ENCODE measurements at regions of chr5 and their contacts with region 1.

Region 1: DNA sequence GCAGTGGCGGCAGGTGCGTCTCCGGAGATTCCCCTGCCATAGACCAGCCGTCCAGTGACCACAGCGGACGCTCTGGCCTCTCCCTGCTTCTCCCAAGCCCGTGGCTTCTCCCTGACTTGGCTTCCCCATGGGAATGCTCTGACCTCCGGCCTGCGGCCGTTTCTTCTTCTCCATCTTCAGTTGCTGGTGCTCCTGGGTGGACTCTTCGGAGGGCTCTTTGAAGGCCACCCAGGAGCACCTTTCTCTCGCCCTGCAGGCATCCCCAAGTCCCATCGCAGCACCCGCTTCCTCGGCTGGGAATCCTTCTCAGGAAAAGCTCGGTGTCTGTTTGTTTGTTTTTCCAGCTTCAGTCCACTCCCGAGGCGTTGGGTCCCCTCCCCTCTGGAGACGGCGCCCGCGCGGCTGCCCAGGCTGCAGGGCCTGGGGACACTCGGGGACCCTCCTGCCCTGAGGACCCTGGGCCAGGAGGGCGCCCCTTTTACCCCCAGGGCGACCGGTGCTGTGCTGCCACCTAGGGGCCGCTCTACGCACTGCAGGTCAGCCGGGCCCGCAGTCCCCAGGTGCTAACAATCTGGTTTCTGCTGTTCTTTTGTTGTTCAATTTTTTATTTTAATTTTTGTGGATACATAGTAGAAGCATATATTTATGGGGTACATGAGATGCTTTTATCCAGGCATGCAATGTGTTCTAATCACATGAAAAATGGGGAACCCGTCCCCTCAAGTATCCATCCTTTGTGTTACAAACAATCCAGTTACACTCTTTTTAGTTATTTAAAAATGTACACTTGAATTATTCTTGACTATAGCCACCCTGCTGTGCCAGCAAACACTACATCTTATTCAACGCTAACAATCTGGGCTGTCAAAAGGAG is 197.9 kb upstream of the ADAMTS16 start:
- DNase-seq: peak; percentile 13
- H3K4me3 Mint-ChIP-seq: no peak overlapping the region
- H3K27ac Mint-ChIP-seq: no peak overlapping the region
- H3K4me1 Mint-ChIP-seq: no peaks in the 10 kb centered on the region
- H3K27me3 Mint-ChIP-seq: no peaks in the 10 kb centered on the region

Region 2: GRCh38 chr5:4879693-4880303 is 62.4 kb before region 1 on chr5:
- CTCF ChIA-PET with region 1: interaction called, 3 read pairs
- intact Hi-C with region 1: loop called (anchors 5 kb)
- DNase-seq: peak; percentile 49
- H3K4me3 Mint-ChIP-seq: no peak overlapping the region
- H3K27ac Mint-ChIP-seq: no peak overlapping the region
- H3K4me1 Mint-ChIP-seq: no peaks in the 10 kb centered on the region
- H3K27me3 Mint-ChIP-seq: no peaks in the 10 kb centered on the region